Mucosa of descending colon (tissue), 3 donors: ENCODE measurements at regions of chr11 and their contacts with region 1.

Region 1: GRCh38 chr11:114159802-114160632 is 100.5 kb downstream of the ZBTB16 start:
- DNase-seq: peak; percentile 99 to 100 (median 99)
- ATAC-seq: peak; percentile 85
- H3K4me3 ChIP-seq: no peak overlapping the region
- H3K4me1 ChIP-seq: peaks cover 68% of the 10 kb centered on the region
- CTCF ChIP-seq: no peak

Region 2: DNA sequence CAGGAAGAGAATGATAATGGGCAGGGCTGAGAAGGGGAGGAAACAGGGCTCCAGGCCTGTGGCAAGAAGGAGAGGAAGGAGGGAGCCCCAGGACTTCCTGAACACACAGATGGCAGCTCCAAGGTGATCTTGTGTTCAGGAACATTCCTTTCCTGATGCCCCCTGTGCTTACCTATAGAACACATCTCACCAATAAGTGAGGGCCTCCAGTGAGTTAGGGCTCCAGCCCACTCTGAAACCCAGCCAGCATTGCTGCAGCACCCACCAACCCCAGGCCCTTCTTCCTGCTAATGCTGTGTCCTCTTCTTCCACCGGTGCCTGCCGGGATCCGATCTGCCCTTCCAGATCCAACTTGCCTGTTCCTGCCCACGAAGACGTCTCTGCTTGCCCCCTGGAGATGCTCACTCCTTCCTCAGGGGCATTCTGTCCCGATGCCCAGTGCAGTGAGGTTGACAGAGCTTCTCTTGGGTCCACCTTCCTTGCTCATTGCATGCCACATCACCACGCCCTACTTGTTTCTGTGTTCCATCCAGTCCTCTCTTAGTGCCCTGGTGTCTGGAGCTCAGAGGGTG is 755.1 kb before region 1 on chr11:
- intact Hi-C with region 1: no loop called
- DNase-seq: no peak
- ATAC-seq: no peak
- H3K4me3 ChIP-seq: no peak overlapping the region
- H3K4me1 ChIP-seq: no peaks in the 10 kb centered on the region
- CTCF ChIP-seq: no peak

Region 3: GRCh38 chr11:113796663-113797259 is 363.3 kb before region 1 on chr11:
- intact Hi-C with region 1: no loop called
- DNase-seq: peak in 1 of 3 donors; percentile 61
- ATAC-seq: peak; percentile 73
- H3K4me3 ChIP-seq: no peak overlapping the region
- H3K4me1 ChIP-seq: no peaks in the 10 kb centered on the region
- CTCF ChIP-seq: peak; percentile 24

Region 4: GRCh38 chr11:114060392-114061350 is 99.3 kb before region 1 on chr11:
- intact Hi-C with region 1: loop called in 1 of 2 experiments (anchors 10 kb)
- DNase-seq: peak in 2 of 3 donors; percentile 54 to 68
- ATAC-seq: peak; percentile 55
- H3K4me3 ChIP-seq: peak overlapping the region; percentile 55
- H3K4me1 ChIP-seq: peaks cover 16% of the 10 kb centered on the region
- CTCF ChIP-seq: no peak

Region 5: GRCh38 chr11:114202011-114202609 is 42.1 kb after region 1 on chr11:
- intact Hi-C with region 1: no loop called
- DNase-seq: no peak
- ATAC-seq: no peak
- H3K4me3 ChIP-seq: no peak overlapping the region
- H3K4me1 ChIP-seq: no peaks in the 10 kb centered on the region
- CTCF ChIP-seq: no peak